ENCODE measurements at regions of chr3 and their contacts with region 1.

Region 1: GRCh38 chr3:48400824-48401433 is 28.9 kb downstream of the FBXW12 start:
- DNase-seq: peak; percentile 79
- H3K4me3 Mint-ChIP-seq: no peak overlapping the region
- H3K27ac Mint-ChIP-seq: no peak overlapping the region
- H3K4me1 Mint-ChIP-seq: no peaks in the 10 kb centered on the region
- H3K27me3 Mint-ChIP-seq: peaks cover 25% of the 10 kb centered on the region

Region 2: DNA sequence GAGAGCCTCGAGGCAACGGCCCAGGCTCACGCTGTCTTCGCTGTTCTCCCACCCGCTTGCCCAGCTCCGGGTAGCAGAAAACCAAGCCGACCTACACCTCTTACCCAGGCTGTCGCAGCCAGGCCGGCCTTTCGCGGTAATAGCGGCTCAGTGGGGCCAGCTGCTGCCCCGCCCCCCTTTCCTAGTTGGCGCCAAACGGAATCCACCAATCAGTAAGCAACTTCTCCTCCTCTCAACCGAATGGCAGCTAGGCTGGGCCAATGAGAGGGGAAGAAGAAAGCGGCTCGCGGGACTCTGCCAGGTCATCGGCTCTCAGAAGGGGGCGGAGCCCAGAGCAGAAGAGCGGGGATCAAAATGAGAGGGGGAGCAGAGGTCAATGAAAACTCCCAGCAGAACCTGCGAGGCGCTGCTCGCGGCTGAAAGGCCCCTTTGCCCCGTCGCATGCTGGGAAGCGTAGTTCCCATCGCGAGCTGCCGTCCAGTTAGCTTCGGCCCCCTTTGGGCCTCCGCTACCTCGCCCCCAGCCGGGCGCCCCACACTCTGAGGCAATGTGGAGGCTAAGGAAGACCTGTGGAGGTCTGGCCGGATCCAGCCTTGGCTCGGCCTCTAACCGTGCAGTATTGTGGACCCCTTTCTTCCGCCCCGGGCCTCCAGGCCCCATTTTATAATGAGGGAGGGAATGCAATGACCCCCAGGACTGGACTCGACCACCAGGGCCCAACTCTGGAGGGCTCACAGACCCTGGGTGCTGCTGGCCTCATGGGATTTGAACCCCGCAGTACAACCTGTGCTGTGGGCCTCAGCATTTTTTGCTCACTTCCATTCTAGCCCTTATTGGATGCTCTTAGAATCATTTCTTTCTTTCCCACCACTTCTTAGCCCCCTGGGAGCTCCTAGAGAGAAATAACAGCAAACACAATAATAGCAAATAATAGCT is 212.4 kb before region 1 on chr3 and contains the start of gene CDC25A:
- CTCF ChIA-PET with region 1: no interaction called
- DNase-seq: peak; percentile 98
- H3K4me3 Mint-ChIP-seq: peak within 1 kb of the TSS; percentile 81
- H3K27ac Mint-ChIP-seq: peak within 1 kb of the TSS; percentile 75
- H3K4me1 Mint-ChIP-seq: peaks cover 36% of the 10 kb centered on the region
- H3K27me3 Mint-ChIP-seq: peaks cover 6% of the 10 kb centered on the region

Region 3: DNA sequence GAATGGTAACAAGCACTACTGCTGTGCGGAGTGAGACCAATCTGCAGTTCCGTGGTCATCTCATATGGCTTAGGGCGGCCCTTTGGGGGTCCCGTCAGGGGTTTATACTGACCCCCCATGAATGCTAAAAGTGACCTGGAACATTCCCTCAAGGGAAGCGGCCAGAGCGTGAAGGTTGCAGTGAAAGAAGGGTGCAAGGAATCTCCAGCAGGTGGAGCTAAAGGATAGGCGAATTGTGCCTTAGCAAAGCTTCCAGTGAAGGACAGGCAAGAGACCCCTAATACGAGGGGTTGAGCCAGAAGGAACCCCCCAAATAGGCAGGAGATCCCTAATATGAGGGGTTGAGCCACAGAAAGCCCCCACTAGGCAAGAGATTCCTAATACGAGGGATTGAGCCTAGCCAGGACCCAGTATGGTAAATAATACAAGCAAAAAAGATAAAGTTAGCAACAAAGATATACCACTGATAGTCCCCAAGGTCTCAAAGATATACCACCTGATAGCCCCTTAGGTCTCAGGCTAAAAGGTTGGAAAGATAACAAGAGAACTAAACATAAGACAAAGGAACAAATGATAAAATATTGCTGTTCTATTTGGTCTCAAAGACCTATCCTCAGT is 127.2 kb before region 1 on chr3:
- CTCF ChIA-PET with region 1: interaction called, 50 read pairs
- DNase-seq: peak; percentile 70
- H3K4me3 Mint-ChIP-seq: no peak overlapping the region
- H3K27ac Mint-ChIP-seq: no peak overlapping the region
- H3K4me1 Mint-ChIP-seq: peaks cover 19% of the 10 kb centered on the region
- H3K27me3 Mint-ChIP-seq: no peaks in the 10 kb centered on the region

Region 4: DNA sequence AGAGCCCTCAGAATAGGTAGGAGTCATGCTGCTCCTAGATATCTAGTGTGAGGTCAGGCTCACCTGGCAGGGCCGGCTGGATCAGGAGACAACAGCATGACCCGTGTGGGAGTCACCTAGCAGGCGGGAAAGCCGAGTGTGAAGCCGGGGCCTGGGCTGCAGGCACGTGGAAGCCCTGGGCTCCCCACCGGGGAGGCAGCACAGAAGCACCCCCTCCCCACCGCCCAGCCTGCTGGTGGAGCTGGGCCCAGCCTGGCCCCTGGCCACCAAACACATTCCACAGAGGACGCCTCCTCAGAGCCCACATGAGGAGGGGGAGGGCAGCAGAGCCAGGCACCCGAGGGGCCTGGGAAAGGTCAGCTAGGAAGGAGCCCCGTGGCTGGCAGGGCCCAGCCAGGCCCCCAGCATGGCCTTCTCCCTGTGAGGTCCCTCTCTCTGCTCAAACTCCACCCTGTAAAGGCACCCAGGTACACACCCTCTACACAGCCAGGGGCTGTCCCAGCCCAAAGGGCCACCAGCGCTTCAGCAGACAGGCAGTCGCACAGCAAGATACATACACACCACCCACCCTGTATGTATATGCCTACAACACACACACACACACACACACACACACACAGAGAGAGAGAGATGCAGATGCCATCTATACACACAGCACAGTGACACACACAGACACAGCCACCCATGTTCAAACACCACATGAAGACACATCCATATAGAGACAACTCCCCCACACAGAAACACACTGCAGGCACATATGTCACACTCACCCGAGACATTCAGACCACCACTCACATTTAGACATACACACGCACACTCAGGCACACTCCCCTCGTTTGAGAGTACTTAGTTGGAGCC is 24.5 kb after region 1 on chr3:
- CTCF ChIA-PET with region 1: interaction called, 170 read pairs
- DNase-seq: no peak
- H3K4me3 Mint-ChIP-seq: no peak overlapping the region
- H3K27ac Mint-ChIP-seq: no peak overlapping the region
- H3K4me1 Mint-ChIP-seq: peaks cover 11% of the 10 kb centered on the region
- H3K27me3 Mint-ChIP-seq: peaks cover 46% of the 10 kb centered on the region

Region 5: GRCh38 chr3:48507351-48508061 is 106.6 kb after region 1 on chr3:
- CTCF ChIA-PET with region 1: interaction called, 27 read pairs
- DNase-seq: peak; percentile 86
- H3K4me3 Mint-ChIP-seq: no peak overlapping the region
- H3K27ac Mint-ChIP-seq: peak overlapping the region; percentile 87
- H3K4me1 Mint-ChIP-seq: peaks cover 64% of the 10 kb centered on the region
- H3K27me3 Mint-ChIP-seq: peaks cover 32% of the 10 kb centered on the region

Region 6: GRCh38 chr3:48548729-48549705 is 148.1 kb after region 1 on chr3:
- CTCF ChIA-PET with region 1: interaction called, 48 read pairs
- DNase-seq: peak; percentile 91
- H3K4me3 Mint-ChIP-seq: no peak overlapping the region
- H3K27ac Mint-ChIP-seq: no peak overlapping the region
- H3K4me1 Mint-ChIP-seq: peaks cover 29% of the 10 kb centered on the region
- H3K27me3 Mint-ChIP-seq: no peaks in the 10 kb centered on the region

Region 7: GRCh38 chr3:48556793-48557626 is 156.1 kb after region 1 on chr3 and contains the start of gene PFKFB4:
- CTCF ChIA-PET with region 1: interaction called, 16 read pairs
- DNase-seq: peak; percentile 100
- H3K4me3 Mint-ChIP-seq: peak within 1 kb of the TSS; percentile 82
- H3K27ac Mint-ChIP-seq: peak within 1 kb of the TSS; percentile 87
- H3K4me1 Mint-ChIP-seq: peaks cover 61% of the 10 kb centered on the region
- H3K27me3 Mint-ChIP-seq: peaks cover 22% of the 10 kb centered on the region

Region 8: GRCh38 chr3:48595526-48596121 is 194.7 kb after region 1 on chr3:
- CTCF ChIA-PET with region 1: no interaction called
- DNase-seq: no peak
- H3K4me3 Mint-ChIP-seq: no peak overlapping the region
- H3K27ac Mint-ChIP-seq: no peak overlapping the region
- H3K4me1 Mint-ChIP-seq: peaks cover 6% of the 10 kb centered on the region
- H3K27me3 Mint-ChIP-seq: peaks cover 65% of the 10 kb centered on the region

Region 9: DNA sequence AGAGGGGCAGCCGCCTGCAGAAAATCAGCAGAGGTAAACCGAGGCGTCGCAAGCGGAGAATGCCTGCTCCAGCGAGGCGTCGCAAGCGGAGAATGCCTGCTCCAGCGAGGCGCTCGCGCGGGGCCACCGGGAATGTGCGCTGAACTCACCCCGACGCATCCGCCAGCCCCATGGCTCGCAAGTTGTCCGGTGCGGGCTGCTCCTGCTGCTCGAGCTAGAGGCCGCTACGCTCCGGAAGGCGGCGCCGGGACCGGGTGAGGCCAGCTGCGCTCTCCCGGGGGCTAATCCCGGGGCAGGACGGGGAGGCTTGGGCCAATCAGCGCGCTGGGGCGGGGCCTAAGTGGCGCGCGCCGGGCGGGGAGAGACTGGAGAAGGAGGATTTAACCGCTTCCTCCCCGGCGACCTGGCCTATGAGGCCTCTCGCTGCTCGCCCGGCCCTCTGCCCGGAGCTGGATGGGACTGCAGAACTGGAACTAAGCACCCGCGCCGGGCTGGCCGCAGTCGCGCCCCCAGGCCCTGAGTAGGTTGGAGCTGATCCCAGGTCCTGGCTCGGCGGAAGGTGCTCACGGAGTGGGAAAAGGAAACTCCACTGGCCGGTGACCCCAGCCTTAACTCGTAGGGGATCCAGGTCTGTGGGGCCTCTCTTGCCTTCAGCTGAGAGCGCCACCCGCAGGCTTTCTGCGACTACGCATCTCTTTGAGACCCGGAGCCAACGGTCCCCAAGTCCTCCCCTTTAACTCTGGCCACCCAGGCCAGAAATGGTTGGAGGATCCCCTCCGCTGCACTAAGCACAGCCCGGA is 234.5 kb after region 1 on chr3 and contains the start of gene SLC26A6:
- CTCF ChIA-PET with region 1: interaction called, 17 read pairs
- DNase-seq: peak; percentile 97
- H3K4me3 Mint-ChIP-seq: peak within 1 kb of the TSS; percentile 87
- H3K27ac Mint-ChIP-seq: peak within 1 kb of the TSS; percentile 87
- H3K4me1 Mint-ChIP-seq: peaks cover 28% of the 10 kb centered on the region
- H3K27me3 Mint-ChIP-seq: peaks cover 3% of the 10 kb centered on the region

Measured in activated naive CD4-positive, alpha-beta T cell treated with anti-CD3 and anti-CD28 coated beads, Interleukin-2, amount 10 ng/mL, durations not matched to agents 7 days and 5 days (primary cell).